ENCODE measurements at regions of chrX and their contacts with region 1.

Region 1: GRCh38 chrX:46573331-46573891 is at the start of gene CHST7:
- DNase-seq: peak; percentile 46
- H3K4me3 Mint-ChIP-seq: peak within 1 kb of the TSS; percentile 80
- H3K27ac Mint-ChIP-seq: peak within 1 kb of the TSS; percentile 91
- H3K4me1 Mint-ChIP-seq: peaks cover 38% of the 10 kb centered on the region
- H3K27me3 Mint-ChIP-seq: no peaks in the 10 kb centered on the region
- total RNA-seq, gene CHST7: 5.2 and 6.2 TPM in 2 replicates

Region 2: GRCh38 chrX:45769761-45770582 is 803.4 kb before region 1 on chrX:
- intact Hi-C with region 1: loop called (anchors 10 kb)
- DNase-seq: peak; percentile 6
- H3K4me3 Mint-ChIP-seq: peak overlapping the region; percentile 98
- H3K27ac Mint-ChIP-seq: peak overlapping the region; percentile 98
- H3K4me1 Mint-ChIP-seq: peaks cover 59% of the 10 kb centered on the region
- H3K27me3 Mint-ChIP-seq: no peaks in the 10 kb centered on the region

Region 3: GRCh38 chrX:46433892-46434291 is 139.5 kb before region 1 on chrX:
- intact Hi-C with region 1: no loop called
- DNase-seq: no peak
- H3K4me3 Mint-ChIP-seq: no peak overlapping the region
- H3K27ac Mint-ChIP-seq: no peak overlapping the region
- H3K4me1 Mint-ChIP-seq: no peaks in the 10 kb centered on the region
- H3K27me3 Mint-ChIP-seq: peaks cover 6% of the 10 kb centered on the region

Region 4: GRCh38 chrX:46545111-46546005 is 28.1 kb before region 1 on chrX and contains the start of gene ZNF674:
- intact Hi-C with region 1: loop called (anchors 1 kb)
- DNase-seq: peak; percentile 90
- H3K4me3 Mint-ChIP-seq: peak within 1 kb of the TSS; percentile 97
- H3K27ac Mint-ChIP-seq: peak within 1 kb of the TSS; percentile 97
- H3K4me1 Mint-ChIP-seq: peaks cover 36% of the 10 kb centered on the region
- H3K27me3 Mint-ChIP-seq: no peaks in the 10 kb centered on the region
- total RNA-seq, gene ZNF674: 1.8 and 3.5 TPM in 2 replicates

Region 5: GRCh38 chrX:46611658-46612362 is 38.4 kb after region 1 on chrX:
- intact Hi-C with region 1: loop called (anchors 2 kb)
- DNase-seq: peak; percentile 38
- H3K4me3 Mint-ChIP-seq: peak overlapping the region; percentile 11
- H3K27ac Mint-ChIP-seq: peak overlapping the region; percentile 70
- H3K4me1 Mint-ChIP-seq: peaks cover 66% of the 10 kb centered on the region
- H3K27me3 Mint-ChIP-seq: no peaks in the 10 kb centered on the region

Region 6: DNA sequence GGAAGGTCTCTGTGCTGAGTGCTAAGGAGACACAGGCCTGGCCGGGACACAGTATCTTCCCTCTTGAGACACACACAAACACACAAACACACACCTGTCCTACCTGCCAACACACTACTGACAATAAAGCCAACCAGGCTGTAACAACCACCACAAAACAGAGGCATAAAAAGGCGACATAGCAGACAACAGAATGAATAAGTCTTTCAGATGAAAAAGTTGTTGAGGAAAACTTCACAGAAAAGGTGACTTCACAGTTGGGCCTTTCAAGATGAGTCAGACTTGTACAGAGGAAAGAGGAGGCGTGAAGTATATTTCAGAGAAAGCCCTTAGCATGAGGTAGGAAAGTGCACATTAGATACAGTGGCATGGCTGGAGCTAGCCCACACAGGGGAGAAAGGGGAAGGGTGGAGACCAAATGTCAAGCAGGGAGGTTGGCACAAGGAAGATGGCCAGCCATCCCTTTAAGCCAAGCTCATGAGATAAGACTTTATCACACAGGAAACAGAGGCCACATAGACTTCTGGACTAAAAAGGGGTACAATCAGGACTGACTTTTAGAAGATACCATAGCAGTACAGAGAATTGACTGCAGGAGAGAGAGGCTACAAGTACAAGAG is 131.5 kb after region 1 on chrX:
- intact Hi-C with region 1: loop called (anchors 2 kb)
- DNase-seq: peak; percentile 32
- H3K4me3 Mint-ChIP-seq: peak overlapping the region; percentile 64
- H3K27ac Mint-ChIP-seq: peak overlapping the region; percentile 88
- H3K4me1 Mint-ChIP-seq: peaks cover 58% of the 10 kb centered on the region
- H3K27me3 Mint-ChIP-seq: no peaks in the 10 kb centered on the region

Region 7: GRCh38 chrX:46836701-46837557 is 263.5 kb after region 1 on chrX and contains the start of gene RP2:
- intact Hi-C with region 1: loop called (anchors 5 kb)
- DNase-seq: peak; percentile 79
- H3K4me3 Mint-ChIP-seq: peak within 1 kb of the TSS; percentile 96
- H3K27ac Mint-ChIP-seq: peak within 1 kb of the TSS; percentile 89
- H3K4me1 Mint-ChIP-seq: no peaks in the 10 kb centered on the region
- H3K27me3 Mint-ChIP-seq: peaks cover 4% of the 10 kb centered on the region
- total RNA-seq, gene RP2: 7.1 and 7.5 TPM in 2 replicates

Measured in activated T-helper 1 cell treated with anti-CD3 and anti-CD28 coated beads, Interleukin-12 subunit alpha, Interleukin-12 subunit beta, Interleukin-2, Interleukin-4 antibody, amounts not matched to agents 30 ng/mL and 10 ng/mL and 1 ng/mL, durations not matched to agents 14 hours and 24 hours and 36 hours (primary cell).